MCF 10A (cell line): ENCODE measurements at regions of chr7 and their contacts with region 1.

Region 1: GRCh38 chr7:121961089-121961867 is 88.3 kb downstream of the PTPRZ1 start:
- DNase-seq: peak; percentile 82
- H3K4me3 Mint-ChIP-seq: peak overlapping the region; percentile 11
- H3K27ac Mint-ChIP-seq: peak overlapping the region; percentile 83
- H3K4me1 Mint-ChIP-seq: peaks cover 12% of the 10 kb centered on the region
- H3K27me3 Mint-ChIP-seq: no peaks in the 10 kb centered on the region
- CTCF ChIP-seq: peak; percentile 24

Region 2: DNA sequence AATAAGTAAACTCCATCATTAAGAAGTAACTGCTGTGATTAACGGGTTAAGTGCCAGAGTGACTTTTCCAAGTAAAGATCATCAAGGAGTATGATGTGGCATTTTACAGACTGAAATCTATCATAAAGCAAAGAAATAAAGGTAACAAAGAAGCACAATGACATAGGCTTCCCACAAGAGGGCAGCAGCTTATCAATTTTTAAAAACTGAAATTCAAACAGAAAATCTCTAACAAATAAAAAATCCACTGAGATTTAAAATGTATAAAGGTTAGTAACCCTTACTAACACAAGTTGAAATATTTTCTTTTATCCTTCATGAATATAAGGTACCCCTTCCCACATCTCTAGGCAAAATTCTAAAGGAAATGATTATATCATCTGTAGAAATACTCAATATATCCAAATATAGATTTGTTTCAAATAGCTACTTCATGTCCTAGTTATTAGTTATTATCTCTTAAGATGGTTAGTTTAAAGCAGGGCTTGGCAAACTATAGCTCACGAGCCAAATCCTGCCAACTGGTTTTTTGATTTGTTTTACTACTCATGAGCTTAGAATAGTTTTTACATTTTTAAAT is 594.3 kb before region 1 on chr7:
- CTCF ChIA-PET with region 1: interaction called, 4 read pairs
- POLR2A ChIA-PET with region 1: no interaction called
- intact Hi-C with region 1: loop called (anchors 1 kb)
- DNase-seq: peak; percentile 37
- H3K4me3 Mint-ChIP-seq: no peak overlapping the region
- H3K27ac Mint-ChIP-seq: peak overlapping the region; percentile 39
- H3K4me1 Mint-ChIP-seq: peaks cover 7% of the 10 kb centered on the region
- H3K27me3 Mint-ChIP-seq: no peaks in the 10 kb centered on the region
- CTCF ChIP-seq: peak; percentile 72

Region 3: GRCh38 chr7:121752706-121753105 is 208.6 kb before region 1 on chr7:
- CTCF ChIA-PET with region 1: interaction called, 10 read pairs
- POLR2A ChIA-PET with region 1: no interaction called
- intact Hi-C with region 1: loop called (anchors 1 kb)
- DNase-seq: peak; percentile 43
- H3K4me3 Mint-ChIP-seq: no peak overlapping the region
- H3K27ac Mint-ChIP-seq: no peak overlapping the region
- H3K4me1 Mint-ChIP-seq: no peaks in the 10 kb centered on the region
- H3K27me3 Mint-ChIP-seq: no peaks in the 10 kb centered on the region
- CTCF ChIP-seq: peak; percentile 39

Region 4: DNA sequence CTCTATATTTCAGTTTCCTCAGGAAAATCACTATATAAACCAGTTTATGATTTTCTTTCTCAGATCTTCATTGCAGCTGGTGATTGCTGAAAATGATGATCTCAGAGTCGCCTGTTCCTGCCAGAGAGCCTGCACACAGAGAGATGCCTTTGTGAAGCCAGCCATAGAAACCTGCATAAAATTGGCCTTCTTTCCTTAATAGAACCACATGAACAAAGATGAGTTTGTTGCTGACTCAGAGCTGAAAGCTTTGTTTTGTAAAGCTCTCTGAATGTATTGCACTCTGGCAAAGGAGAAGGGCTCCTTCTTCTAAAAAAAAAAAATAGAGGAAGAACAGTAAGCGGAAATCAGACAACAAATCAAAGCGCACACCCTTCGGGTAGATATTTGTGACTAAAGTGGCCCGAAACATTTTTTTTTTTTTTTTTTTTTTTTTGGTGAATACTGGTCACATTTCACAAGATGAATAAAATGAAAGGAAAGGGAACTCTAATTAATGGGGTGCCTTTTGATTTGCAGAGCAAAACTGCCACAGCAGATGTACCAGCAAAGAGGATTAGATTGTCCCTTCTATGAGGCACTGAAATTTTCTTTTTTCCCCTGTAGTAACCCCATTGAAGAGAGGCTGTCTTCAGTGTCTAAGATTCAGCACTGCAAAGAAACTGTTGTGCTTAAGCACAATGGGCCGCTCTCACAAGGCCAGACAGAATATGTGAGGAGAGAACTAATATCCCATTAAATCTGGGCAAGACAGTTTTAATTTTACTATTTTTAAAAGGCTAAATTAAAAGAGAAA is 163.4 kb before region 1 on chr7:
- CTCF ChIA-PET with region 1: interaction called, 3 read pairs
- POLR2A ChIA-PET with region 1: interaction called, 5 read pairs
- intact Hi-C with region 1: loop called (anchors 5 kb)
- DNase-seq: peak; percentile 35
- H3K4me3 Mint-ChIP-seq: peak overlapping the region; percentile 55
- H3K27ac Mint-ChIP-seq: peak overlapping the region; percentile 87
- H3K4me1 Mint-ChIP-seq: peaks cover 55% of the 10 kb centered on the region
- H3K27me3 Mint-ChIP-seq: no peaks in the 10 kb centered on the region
- CTCF ChIP-seq: no peak

Region 5: GRCh38 chr7:121945066-121945848 is 16.0 kb before region 1 on chr7:
- CTCF ChIA-PET with region 1: interaction called, 3 read pairs
- POLR2A ChIA-PET with region 1: interaction called, 10 read pairs
- intact Hi-C with region 1: no loop called
- DNase-seq: peak; percentile 60
- H3K4me3 Mint-ChIP-seq: peak overlapping the region; percentile 63
- H3K27ac Mint-ChIP-seq: peak overlapping the region; percentile 69
- H3K4me1 Mint-ChIP-seq: peaks cover 22% of the 10 kb centered on the region
- H3K27me3 Mint-ChIP-seq: no peaks in the 10 kb centered on the region
- CTCF ChIP-seq: no peak